ENCODE measurements at regions of chr15 and their contacts with region 1.

Region 1: DNA sequence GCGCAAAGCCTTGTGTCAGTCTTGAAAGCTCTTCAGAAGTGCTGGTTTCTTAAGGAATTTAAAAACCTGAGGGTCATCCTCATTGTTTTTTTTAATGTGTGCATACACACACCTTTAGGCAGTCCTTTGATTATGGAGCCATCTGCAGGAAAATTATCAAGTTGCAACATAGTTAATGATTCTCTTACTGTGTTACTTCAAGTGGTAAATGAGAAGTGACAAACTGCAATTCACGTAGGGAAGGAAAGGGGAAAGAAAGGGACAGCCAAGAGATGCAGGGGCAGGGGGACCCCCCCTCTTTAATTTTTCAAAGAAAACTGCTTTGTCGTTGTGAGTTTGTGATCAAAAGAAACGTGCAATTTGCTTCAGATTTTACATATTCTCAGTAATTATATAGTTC is 162.4 kb upstream of the CGNL1 start:
- DNase-seq: no peak
- ATAC-seq: peak; percentile 72

Region 2: GRCh38 chr15:56496635-56497034 is 717.2 kb before region 1 on chr15:
- intact Hi-C with region 1: loop called (anchors 5 kb)
- DNase-seq: no peak
- ATAC-seq: peak; percentile 75

Region 3: GRCh38 chr15:56811586-56811985 is 402.3 kb before region 1 on chr15:
- intact Hi-C with region 1: no loop called
- DNase-seq: no peak
- ATAC-seq: no peak

Region 4: DNA sequence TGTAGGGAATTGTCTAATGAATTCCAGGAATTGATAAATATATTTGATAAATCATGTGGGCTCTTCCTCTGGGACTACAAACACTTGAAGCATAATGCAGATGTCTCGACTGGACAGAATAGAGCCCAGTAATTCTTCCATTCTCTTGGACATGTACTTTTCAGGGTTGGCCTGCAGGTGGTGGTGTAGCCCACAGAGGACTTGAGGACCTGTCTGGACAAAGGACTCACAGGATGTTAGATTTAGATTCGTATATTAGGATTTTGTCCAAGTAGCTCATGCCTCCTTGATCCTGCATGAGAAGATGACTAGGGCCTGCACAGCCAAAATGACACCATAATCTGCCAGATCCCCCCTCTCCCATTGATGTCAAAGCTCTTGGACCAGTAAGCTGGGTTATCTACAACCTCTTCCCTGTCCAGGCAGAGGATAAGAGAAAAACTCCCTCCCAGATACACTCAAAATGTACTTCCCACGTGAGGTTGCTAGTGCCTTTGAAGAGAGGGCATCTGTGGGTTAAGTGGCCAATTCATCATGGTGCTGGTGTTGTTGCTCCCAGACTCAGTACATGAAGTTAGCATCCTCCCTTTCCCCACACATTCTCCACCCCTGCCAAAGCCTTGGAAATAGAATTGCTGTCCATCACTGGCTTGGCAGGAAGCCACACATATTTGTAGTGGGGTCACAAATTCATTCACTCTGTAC is 392.0 kb before region 1 on chr15:
- intact Hi-C with region 1: loop called (anchors 5 kb)
- DNase-seq: no peak
- ATAC-seq: peak; percentile 74

Region 5: GRCh38 chr15:56837273-56837672 is 376.6 kb before region 1 on chr15:
- intact Hi-C with region 1: no loop called
- DNase-seq: no peak
- ATAC-seq: no peak

Region 6: GRCh38 chr15:56886932-56887781 is 326.7 kb before region 1 on chr15:
- intact Hi-C with region 1: loop called (anchors 10 kb)
- DNase-seq: peak; percentile 97
- ATAC-seq: peak; percentile 98

Region 7: GRCh38 chr15:56918046-56918938 is 295.6 kb before region 1 on chr15 and contains the start of gene TCF12:
- intact Hi-C with region 1: loop called (anchors 10 kb)
- DNase-seq: peak; percentile 96
- ATAC-seq: peak; percentile 98
- total RNA-seq, gene TCF12: 46.5 TPM

Region 8: DNA sequence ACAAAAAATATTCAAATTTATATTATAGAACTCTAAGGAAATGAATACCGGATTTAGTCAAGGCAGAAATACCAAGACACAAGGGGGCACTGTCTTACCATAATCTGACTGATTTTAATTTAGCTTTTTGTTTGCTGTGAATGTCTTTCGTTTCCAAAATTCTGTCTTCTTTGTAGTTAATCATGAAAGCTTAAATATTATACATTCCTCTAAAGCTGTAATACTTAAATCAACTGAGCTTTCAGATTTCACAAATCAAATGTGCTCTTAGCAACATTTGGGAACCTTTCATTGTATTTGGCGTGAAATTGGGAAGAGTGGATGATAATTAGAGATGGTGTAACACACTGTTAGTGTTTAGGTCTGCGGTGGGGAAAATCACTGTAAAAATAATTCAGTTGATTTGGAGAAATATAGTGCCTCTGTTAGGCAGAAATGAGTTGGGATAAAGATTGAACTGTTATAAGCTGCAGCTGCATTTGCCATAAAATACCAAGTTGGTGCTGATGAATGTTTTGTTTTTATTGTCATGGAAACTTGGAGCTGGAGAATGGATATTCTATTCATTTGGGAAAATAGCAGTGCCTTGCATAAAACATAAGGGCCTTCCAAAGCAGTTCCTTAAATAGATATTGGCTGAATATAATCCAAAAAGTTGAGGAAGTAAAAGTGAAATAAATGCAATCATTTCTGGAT is 67.2 kb before region 1 on chr15:
- intact Hi-C with region 1: loop called (anchors 1 kb)
- DNase-seq: no peak
- ATAC-seq: peak; percentile 59

Region 9: GRCh38 chr15:57273402-57273801 is 59.5 kb after region 1 on chr15:
- intact Hi-C with region 1: no loop called
- DNase-seq: no peak
- ATAC-seq: no peak

Region 10: DNA sequence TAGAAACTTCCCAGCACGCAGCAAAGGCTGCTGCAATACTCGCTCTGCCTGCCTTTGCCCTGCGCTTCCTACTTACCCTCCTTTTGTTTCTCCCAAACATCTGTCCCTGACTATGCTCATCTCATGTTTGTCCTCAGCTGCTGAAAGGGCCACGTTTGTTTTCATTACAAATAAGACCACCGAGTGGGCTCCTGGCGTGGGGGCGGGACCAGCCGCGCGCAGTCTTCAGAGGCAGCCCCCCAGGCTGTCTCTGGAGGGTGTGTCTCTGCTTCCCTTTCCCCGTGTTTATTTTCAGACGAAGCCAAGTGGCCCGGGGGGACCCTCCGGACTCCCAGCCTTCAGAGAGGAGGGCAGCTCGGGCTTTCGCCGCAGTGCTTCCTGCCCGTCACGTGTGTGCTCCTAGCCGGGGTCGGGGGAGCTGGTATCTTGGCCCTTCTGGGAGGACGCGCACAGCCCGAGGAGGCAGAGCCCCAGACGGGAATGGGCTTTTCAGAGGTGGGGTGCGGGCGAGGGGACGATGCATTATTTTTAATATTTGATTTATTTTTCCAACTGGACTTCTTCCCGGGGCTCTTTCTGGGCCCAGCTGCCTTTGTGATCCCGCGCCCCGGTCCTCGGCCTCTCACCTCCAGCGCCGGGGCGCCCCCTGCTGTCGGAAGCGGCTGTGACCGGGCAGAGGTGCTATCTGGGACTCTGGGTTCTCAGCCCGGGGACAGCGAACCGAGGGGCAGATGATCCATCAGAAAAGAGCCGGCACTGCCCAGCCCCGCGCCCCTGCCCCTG is 92.5 kb after region 1 on chr15:
- intact Hi-C with region 1: loop called (anchors 10 kb)
- DNase-seq: peak; percentile 95
- ATAC-seq: peak; percentile 88